ENCODE measurements at regions of chr10 and their contacts with region 1.

Region 1: GRCh38 chr10:119542988-119543813 is 682 bp upstream of the RGS10 start:
- DNase-seq: peak; percentile 50
- H3K4me3 Mint-ChIP-seq: peak overlapping the region; percentile 84
- H3K27ac Mint-ChIP-seq: peak overlapping the region; percentile 91
- H3K4me1 Mint-ChIP-seq: peaks cover 40% of the 10 kb centered on the region
- H3K27me3 Mint-ChIP-seq: peaks cover 15% of the 10 kb centered on the region

Region 2: GRCh38 chr10:119103903-119104652 is 439.1 kb before region 1 on chr10 and contains the start of gene DENND10:
- intact Hi-C with region 1: loop called (anchors 1 kb)
- DNase-seq: peak; percentile 68
- H3K4me3 Mint-ChIP-seq: peak within 1 kb of the TSS; percentile 87
- H3K27ac Mint-ChIP-seq: peak within 1 kb of the TSS; percentile 58
- H3K4me1 Mint-ChIP-seq: peaks cover 22% of the 10 kb centered on the region
- H3K27me3 Mint-ChIP-seq: no peaks in the 10 kb centered on the region
- total RNA-seq, gene DENND10: 20.1 and 25.4 TPM in 2 replicates

Region 3: GRCh38 chr10:119178372-119179119 is 364.7 kb before region 1 on chr10 and contains the start of gene PRDX3:
- intact Hi-C with region 1: loop called (anchors 2 kb)
- DNase-seq: peak; percentile 89
- H3K4me3 Mint-ChIP-seq: peak within 1 kb of the TSS; percentile 100
- H3K27ac Mint-ChIP-seq: peak within 1 kb of the TSS; percentile 100
- H3K4me1 Mint-ChIP-seq: peaks cover 30% of the 10 kb centered on the region
- H3K27me3 Mint-ChIP-seq: no peaks in the 10 kb centered on the region
- total RNA-seq, gene PRDX3: 158 and 163 TPM in 2 replicates

Region 4: GRCh38 chr10:119445311-119445934 is 97.8 kb before region 1 on chr10:
- intact Hi-C with region 1: loop called (anchors 10 kb)
- DNase-seq: peak; percentile 71
- H3K4me3 Mint-ChIP-seq: no peak overlapping the region
- H3K27ac Mint-ChIP-seq: no peak overlapping the region
- H3K4me1 Mint-ChIP-seq: peaks cover 3% of the 10 kb centered on the region
- H3K27me3 Mint-ChIP-seq: no peaks in the 10 kb centered on the region

Region 5: GRCh38 chr10:119502209-119502608 is 41.0 kb before region 1 on chr10:
- intact Hi-C with region 1: loop called (anchors 1 kb)
- DNase-seq: peak; percentile 71
- H3K4me3 Mint-ChIP-seq: peak overlapping the region; percentile 70
- H3K27ac Mint-ChIP-seq: peak overlapping the region; percentile 94
- H3K4me1 Mint-ChIP-seq: peaks cover 90% of the 10 kb centered on the region
- H3K27me3 Mint-ChIP-seq: no peaks in the 10 kb centered on the region

Region 6: DNA sequence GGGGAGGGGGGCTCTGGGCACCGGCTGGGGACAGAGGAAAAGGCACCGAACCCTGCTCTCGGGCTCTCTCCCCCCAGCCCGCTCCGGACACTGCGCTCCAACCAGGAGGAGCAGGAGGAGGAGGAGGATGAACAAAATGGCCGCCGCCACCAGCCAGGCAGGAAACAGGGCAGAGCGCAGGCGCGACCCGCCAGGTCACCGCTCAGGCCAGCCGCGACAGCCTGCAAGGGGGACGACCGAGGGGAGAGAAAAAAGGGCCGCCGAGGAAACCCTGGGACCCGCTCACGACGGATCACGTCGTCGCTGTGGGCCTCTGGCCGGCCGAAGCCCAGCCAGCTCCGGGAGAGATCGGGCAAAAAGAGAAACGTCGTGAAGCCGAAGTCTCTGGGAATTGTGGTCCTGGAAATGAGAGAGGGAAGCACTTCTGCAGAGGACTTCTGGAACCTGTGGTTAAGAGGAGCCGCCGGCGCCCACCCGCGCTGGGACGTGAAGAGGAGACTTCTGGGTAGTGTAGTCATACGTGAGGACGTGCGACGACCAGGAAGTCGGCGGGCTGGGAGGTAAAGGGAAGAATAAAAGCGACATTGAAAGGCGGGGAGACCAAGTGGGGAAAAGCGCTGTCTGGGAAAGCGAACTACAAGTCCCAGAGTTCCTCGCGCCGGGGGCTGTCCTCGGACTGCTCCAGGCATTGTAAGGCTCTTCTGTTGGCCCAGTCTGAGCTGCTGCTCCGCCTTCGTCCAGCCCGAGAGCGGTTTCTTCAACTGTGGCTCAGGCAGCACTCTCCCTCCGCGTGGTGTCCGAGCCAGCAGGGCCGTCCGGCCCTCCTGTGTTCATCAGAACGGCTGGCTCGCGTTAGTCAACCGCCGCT is 53.6 kb after region 1 on chr10 and contains the start of gene TIAL1:
- intact Hi-C with region 1: loop called (anchors 1 kb)
- DNase-seq: peak; percentile 92
- H3K4me3 Mint-ChIP-seq: peak within 1 kb of the TSS; percentile 91
- H3K27ac Mint-ChIP-seq: peak within 1 kb of the TSS; percentile 98
- H3K4me1 Mint-ChIP-seq: peaks cover 51% of the 10 kb centered on the region
- H3K27me3 Mint-ChIP-seq: no peaks in the 10 kb centered on the region
- total RNA-seq, gene TIAL1: 192 and 195 TPM in 2 replicates

Region 7: GRCh38 chr10:119892188-119893065 is 349.2 kb after region 1 on chr10 and contains the start of gene SEC23IP:
- intact Hi-C with region 1: loop called (anchors 1 kb)
- DNase-seq: peak; percentile 92
- H3K4me3 Mint-ChIP-seq: peak within 1 kb of the TSS; percentile 92
- H3K27ac Mint-ChIP-seq: peak within 1 kb of the TSS; percentile 96
- H3K4me1 Mint-ChIP-seq: peaks cover 53% of the 10 kb centered on the region
- H3K27me3 Mint-ChIP-seq: peaks cover 4% of the 10 kb centered on the region
- total RNA-seq, gene SEC23IP: 79.7 and 91.7 TPM in 2 replicates

Measured in activated T-helper 1 cell treated with anti-CD3 and anti-CD28 coated beads, Interleukin-12 subunit alpha, Interleukin-12 subunit beta, Interleukin-2, Interleukin-4 antibody, amounts not matched to agents 30 ng/mL and 10 ng/mL and 1 ng/mL, durations not matched to agents 14 hours and 24 hours and 36 hours (primary cell).